GM18951 (cell line): ENCODE measurements at regions of chr17 and their contacts with region 1.

Region 1: DNA sequence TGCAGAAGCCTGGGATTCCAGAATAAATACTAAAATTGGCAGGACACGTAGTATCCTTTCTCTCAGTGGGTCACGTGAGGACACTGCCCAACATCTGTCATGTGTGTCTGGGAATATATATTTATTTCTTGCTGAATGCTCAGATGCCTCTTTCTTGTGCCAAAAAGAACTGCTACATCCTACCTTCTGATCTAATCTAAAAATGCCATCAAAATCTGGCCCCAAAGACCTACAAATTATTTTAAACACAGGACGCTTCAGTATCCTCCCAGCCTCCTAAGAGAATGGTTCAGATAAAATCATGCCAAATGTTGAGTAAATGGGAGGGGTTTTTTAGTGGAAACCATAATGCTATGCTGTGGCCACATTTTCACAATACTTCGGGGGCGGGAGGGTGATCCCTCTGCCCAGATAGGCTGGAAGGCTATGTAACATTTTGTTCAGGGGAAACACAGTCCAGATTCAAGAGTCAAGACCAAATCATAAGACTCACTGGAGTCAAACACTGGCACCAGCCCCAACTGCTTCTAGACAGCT is 22.9 kb upstream of the CORO6 start:
- POLR2A ChIP-seq: no peak

Region 2: DNA sequence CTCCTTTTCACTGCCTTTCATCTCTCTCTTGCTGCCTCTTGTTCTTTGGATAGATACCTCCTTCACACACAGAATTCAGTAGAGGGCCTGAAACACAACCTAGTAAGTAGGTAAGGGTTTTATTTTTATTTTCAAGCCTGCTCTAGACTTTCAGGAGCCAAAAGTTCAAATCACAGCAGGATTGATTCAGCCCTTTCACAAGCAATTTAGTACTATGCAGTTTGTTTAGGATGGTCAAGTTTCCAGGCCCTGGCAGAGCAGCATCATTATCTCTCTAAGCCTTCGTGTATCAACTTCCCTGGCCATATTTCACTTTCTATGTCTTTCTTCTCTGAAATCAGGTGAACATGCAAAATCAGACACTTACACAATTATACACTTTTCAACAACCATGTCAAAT is 126.0 kb after region 1 on chr17:
- in situ Hi-C with region 1: loop called (anchors 10 kb)
- POLR2A ChIP-seq: no peak